OCI-LY7 (cell line): ENCODE measurements at regions of chr16 and their contacts with region 1.

Region 1: GRCh38 chr16:81841722-81842121 is 62.6 kb downstream of the PLCG2 start:
- DNase-seq: peak; percentile 65
- H3K4me3 ChIP-seq: no peak overlapping the region
- H3K27ac ChIP-seq: peak overlapping the region; percentile 59
- H3K4me1 ChIP-seq: peaks cover 76% of the 10 kb centered on the region
- CTCF ChIP-seq: no peak

Region 2: GRCh38 chr16:81855552-81856153 is 13.9 kb after region 1 on chr16:
- CTCF ChIA-PET with region 1: interaction called, 3 read pairs
- POLR2A ChIA-PET with region 1: interaction called, 15 read pairs
- intact Hi-C with region 1: no loop called
- DNase-seq: peak; percentile 62
- H3K4me3 ChIP-seq: no peak overlapping the region
- H3K27ac ChIP-seq: peak overlapping the region; percentile 61
- H3K4me1 ChIP-seq: peaks cover 62% of the 10 kb centered on the region
- CTCF ChIP-seq: peak; percentile 69